ENCODE measurements at regions of chr2 and their contacts with region 1.

Region 1: DNA sequence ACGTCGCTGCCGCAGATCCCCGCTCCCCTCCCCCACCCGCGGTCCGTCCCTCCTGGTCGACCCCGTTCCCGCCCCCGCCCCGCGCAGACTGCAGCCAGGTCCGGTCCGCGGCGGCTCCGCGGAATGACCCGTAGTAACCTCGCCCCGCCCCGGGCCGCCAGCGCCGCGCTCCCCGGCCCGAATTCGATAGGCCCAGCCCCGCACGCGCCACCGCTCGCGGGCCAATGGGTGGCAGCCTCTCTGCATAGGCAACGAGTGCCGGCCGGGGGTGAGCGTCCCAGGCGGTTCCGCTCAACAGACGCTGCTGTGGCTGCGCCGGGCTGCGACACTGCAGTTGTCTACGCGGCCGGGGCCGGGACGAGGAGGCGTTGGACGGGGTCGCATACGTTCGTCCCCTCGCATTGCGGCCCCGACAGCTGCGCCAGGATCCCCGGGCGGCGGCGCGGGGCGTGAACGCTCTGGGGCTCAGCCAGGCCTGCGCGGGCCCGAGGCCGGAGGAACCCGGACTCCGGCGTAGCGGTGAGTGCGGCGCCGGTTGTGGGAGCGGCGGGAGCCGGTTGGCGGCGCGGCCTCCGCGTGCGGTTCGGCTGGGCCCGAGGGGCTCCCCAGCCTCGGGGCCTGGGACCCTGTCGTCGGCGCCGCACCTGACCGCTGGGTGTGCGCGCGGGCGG is at the start of gene ACSL3:
- DNase-seq: peak; percentile 94 to 100
- H3K4me3 ChIP-seq: peak within 1 kb of the TSS; percentile 83
- H3K27ac ChIP-seq: peak within 1 kb of the TSS; percentile 90
- H3K4me1 ChIP-seq: peaks cover 66% of the 10 kb centered on the region
- H3K27me3 ChIP-seq: no peaks in the 10 kb centered on the region
- CTCF ChIP-seq: no peak; the same call in 1 of the 2 replicates
- total RNA-seq, gene ACSL3: 300 and 446 TPM in 2 replicates

Region 2: DNA sequence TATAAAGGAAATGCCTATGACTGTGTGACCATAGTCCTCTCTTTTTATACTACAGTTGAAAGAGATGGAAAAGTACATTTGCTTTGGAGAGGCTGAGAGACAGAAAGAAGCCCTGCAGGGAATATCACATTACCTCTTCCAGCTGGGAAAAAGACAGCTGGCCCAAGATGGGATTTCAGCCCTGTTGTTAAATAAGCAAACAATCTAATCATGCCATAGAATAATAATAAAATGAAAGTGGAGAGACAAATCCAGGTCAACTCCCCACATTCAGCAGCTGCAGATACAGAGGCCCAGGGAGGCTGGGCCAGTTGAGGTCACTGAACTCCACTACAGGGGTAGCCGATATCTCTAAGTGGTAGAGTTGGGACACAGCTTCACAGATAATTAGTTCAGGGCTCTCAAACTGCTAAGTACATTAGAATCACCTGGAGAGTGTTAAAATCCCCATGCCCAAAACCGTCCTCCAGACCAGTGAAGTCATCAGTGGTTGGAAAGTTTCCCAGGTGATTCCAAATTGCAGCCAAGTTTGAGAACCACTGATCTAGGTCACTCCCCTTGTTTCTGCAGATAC is 107.5 kb before region 1 on chr2:
- CTCF ChIA-PET with region 1: interaction called, 12 read pairs
- POLR2A ChIA-PET with region 1: no interaction called
- intact Hi-C with region 1: no loop called
- DNase-seq: no peak
- H3K4me3 ChIP-seq: no peak overlapping the region
- H3K27ac ChIP-seq: no peak overlapping the region
- H3K4me1 ChIP-seq: peaks cover 28% of the 10 kb centered on the region
- H3K27me3 ChIP-seq: no peaks in the 10 kb centered on the region
- CTCF ChIP-seq: no peak

Region 3: DNA sequence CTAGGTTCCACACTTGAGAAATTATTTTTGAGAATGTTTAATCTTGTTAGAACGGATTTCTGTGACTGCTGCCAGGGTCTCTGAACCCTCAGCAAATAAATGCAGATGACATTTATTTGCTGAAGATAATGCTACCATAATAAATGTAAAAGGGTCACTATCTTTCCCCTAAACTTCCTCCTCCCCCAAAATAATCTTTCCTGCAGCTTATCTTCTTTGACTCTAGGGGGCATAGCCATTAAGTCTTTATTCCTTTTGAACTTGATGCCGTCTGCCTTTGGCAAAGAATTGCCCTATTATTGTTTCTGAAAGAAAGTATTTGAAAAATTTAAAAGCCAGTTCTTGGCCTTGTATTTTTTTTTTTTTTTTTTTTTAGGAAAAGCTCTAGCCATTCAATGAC is 63.6 kb before region 1 on chr2:
- CTCF ChIA-PET with region 1: interaction called, 15 read pairs
- POLR2A ChIA-PET with region 1: interaction called, 8 read pairs
- intact Hi-C with region 1: no loop called
- DNase-seq: peak in 1 of 2 experiments; percentile 68
- H3K4me3 ChIP-seq: no peak overlapping the region
- H3K27ac ChIP-seq: no peak overlapping the region
- H3K4me1 ChIP-seq: peaks cover 18% of the 10 kb centered on the region
- H3K27me3 ChIP-seq: no peaks in the 10 kb centered on the region
- CTCF ChIP-seq: peak; percentile 74

Region 4: GRCh38 chr2:222837511-222838056 is 23.3 kb before region 1 on chr2:
- CTCF ChIA-PET with region 1: interaction called, 8 read pairs
- POLR2A ChIA-PET with region 1: interaction called, 19 read pairs
- intact Hi-C with region 1: loop called (anchors 1 kb)
- DNase-seq: peak; percentile 75 to 100
- H3K4me3 ChIP-seq: peak overlapping the region; percentile 31; the same call in 1 of the 2 replicates
- H3K27ac ChIP-seq: peak overlapping the region; percentile 82
- H3K4me1 ChIP-seq: peaks cover 83% of the 10 kb centered on the region
- H3K27me3 ChIP-seq: no peaks in the 10 kb centered on the region
- CTCF ChIP-seq: no peak

Region 5: GRCh38 chr2:222878877-222879603 is 18.2 kb after region 1 on chr2:
- CTCF ChIA-PET with region 1: interaction called, 9 read pairs
- POLR2A ChIA-PET with region 1: interaction called, 5 read pairs
- intact Hi-C with region 1: loop called (anchors 1 kb)
- DNase-seq: peak; percentile 79 to 99
- H3K4me3 ChIP-seq: no peak overlapping the region
- H3K27ac ChIP-seq: peak overlapping the region; percentile 69
- H3K4me1 ChIP-seq: peaks cover 88% of the 10 kb centered on the region
- H3K27me3 ChIP-seq: no peaks in the 10 kb centered on the region
- CTCF ChIP-seq: no peak

Region 6: GRCh38 chr2:223641097-223641496 is 780.2 kb after region 1 on chr2:
- CTCF ChIA-PET with region 1: no interaction called
- POLR2A ChIA-PET with region 1: interaction called, 10 read pairs
- intact Hi-C with region 1: no loop called
- DNase-seq: peak; percentile 65 to 67
- H3K4me3 ChIP-seq: no peak overlapping the region
- H3K27ac ChIP-seq: no peak overlapping the region
- H3K4me1 ChIP-seq: 0 out of 2 replicates have a peak, but pooled peaks cover 5% of the 10 kb centered on the region
- H3K27me3 ChIP-seq: no peaks in the 10 kb centered on the region
- CTCF ChIP-seq: no peak

Measured in PC-9 (cell line).